ENCODE measurements at regions of chr7 and their contacts with region 1.

Region 1: DNA sequence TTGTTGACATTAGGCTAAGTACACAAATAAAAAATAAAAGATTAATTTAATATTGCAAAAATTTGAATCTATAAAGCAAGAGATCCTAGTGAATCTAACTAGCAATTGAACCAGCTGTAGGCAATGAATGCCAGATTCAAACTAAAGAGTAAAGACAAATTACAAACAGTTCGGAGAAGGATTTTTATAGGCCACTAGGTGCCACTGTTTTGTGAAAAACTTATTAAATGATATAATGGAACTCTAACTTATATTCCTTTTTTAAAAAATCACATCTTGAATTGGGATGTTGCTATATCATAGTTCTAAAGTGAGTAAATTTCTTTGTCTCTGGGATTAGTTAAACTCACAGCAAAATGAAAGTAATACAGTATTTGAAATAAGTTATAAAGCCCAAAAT is 39.1 kb upstream of the GNAI1 start:
- DNase-seq: no peak
- H3K4me3 ChIP-seq: no peak overlapping the region
- H3K27ac ChIP-seq: no peak overlapping the region
- H3K4me1 ChIP-seq: no peaks in the 10 kb centered on the region
- H3K27me3 ChIP-seq: no peaks in the 10 kb centered on the region
- CTCF ChIP-seq: peak in 1 of 3 experiments; percentile 2; a peak in 2 of 4 replicates
- EP300 ChIP-seq: no peak
- POLR2A ChIP-seq: no peak
- RAD21 ChIP-seq: peak; percentile 12 to 32; a peak in 1 of 4 replicates

Region 2: DNA sequence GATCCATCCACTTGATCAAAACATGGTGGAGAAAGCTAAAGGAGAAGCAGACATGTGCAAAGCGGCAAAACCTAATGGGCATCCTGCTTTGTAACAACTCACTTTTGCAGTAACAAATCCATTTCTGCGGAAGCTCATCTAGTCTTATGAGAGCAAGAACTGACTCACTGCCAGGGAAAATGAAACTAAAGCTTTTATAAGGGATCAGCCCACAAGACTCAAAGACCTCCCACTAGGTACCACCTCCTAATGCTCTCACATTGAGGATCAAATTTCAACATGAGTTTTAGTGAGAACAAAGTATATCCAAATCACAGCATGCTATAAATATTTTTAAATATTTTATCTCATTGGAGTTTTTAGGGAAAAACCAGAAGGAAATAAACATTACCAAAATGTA is 81.0 kb before region 1 on chr7:
- CTCF ChIA-PET with region 1: no interaction called
- POLR2A ChIA-PET with region 1: no interaction called
- DNase-seq: no peak
- H3K4me3 ChIP-seq: peak overlapping the region in 1 of 4 experiments; percentile 23; a peak in 1 of 8 replicates
- H3K27ac ChIP-seq: no peak overlapping the region
- H3K4me1 ChIP-seq: peaks cover 0 to 3% (median 1%) of the 10 kb centered on the region in 4 experiments; a peak in 2 of 7 replicates
- H3K27me3 ChIP-seq: no peaks in the 10 kb centered on the region
- CTCF ChIP-seq: no peak
- EP300 ChIP-seq: no peak
- POLR2A ChIP-seq: no peak
- RAD21 ChIP-seq: no peak

Region 3: DNA sequence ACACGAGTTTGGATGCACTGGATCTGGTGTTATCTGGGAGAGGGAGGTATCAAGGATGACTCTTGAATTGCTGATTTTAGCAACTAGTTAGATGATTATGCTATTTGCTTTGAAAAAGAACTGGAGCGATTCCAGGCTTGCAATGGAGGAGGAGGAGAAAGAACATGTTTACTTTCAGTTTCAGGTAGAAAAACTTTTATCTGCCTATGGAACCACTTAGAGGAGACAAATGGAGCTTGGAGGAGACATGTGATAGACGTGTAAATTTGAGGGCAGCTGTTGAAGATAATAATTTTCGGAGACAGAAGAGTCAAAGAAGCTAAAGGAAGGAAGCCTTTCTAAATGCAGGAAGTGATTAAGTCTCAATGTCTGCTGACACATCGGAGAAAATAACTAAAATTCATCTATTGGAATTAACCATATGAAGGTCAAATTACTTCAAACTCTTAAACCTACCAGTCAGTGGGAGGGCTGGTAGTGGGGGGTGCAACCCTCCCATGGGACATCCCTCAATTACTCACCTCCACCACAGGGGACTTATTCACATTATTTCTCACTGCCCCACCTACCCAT is 17.3 kb before region 1 on chr7:
- CTCF ChIA-PET with region 1: interaction called, 12 read pairs
- POLR2A ChIA-PET with region 1: no interaction called
- DNase-seq: no peak
- H3K4me3 ChIP-seq: no peak overlapping the region
- H3K27ac ChIP-seq: no peak overlapping the region
- H3K4me1 ChIP-seq: no peaks in the 10 kb centered on the region
- H3K27me3 ChIP-seq: no peaks in the 10 kb centered on the region
- CTCF ChIP-seq: no peak
- EP300 ChIP-seq: no peak
- POLR2A ChIP-seq: no peak
- RAD21 ChIP-seq: no peak

Region 4: DNA sequence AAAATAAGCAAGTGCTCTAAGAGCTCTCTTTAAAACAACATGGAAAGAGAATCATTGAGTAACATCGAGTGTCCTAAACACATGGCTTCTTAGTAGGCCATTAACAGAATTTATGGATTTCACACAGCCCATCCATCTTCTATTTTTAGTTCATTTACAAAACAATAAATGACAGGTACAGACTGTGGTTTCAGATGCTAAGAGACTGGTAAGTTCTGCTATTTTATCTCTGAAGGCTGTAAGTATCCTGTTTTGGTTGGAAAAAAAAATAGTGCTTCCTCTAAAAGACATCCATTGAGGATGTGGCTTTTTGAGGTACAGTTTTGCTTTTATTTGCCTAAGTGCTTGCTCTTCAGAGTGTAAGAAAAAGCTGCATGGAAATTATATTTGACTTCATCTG is 11.7 kb after region 1 on chr7:
- CTCF ChIA-PET with region 1: interaction called, 17 read pairs
- POLR2A ChIA-PET with region 1: no interaction called
- DNase-seq: no peak
- H3K4me3 ChIP-seq: no peak overlapping the region
- H3K27ac ChIP-seq: no peak overlapping the region
- H3K4me1 ChIP-seq: peaks cover 0 to 4% (median 0%) of the 10 kb centered on the region in 4 experiments; a peak in 2 of 7 replicates
- H3K27me3 ChIP-seq: no peaks in the 10 kb centered on the region
- CTCF ChIP-seq: no peak
- EP300 ChIP-seq: no peak
- POLR2A ChIP-seq: no peak
- RAD21 ChIP-seq: no peak

Region 5: GRCh38 chr7:80114159-80114558 is 18.6 kb after region 1 on chr7:
- CTCF ChIA-PET with region 1: interaction called, 13 read pairs
- POLR2A ChIA-PET with region 1: no interaction called
- DNase-seq: no peak
- H3K4me3 ChIP-seq: no peak overlapping the region
- H3K27ac ChIP-seq: no peak overlapping the region
- H3K4me1 ChIP-seq: peaks cover 0 to 3% (median 0%) of the 10 kb centered on the region in 4 experiments; a peak in 1 of 7 replicates
- H3K27me3 ChIP-seq: no peaks in the 10 kb centered on the region
- CTCF ChIP-seq: no peak
- EP300 ChIP-seq: no peak
- POLR2A ChIP-seq: no peak
- RAD21 ChIP-seq: no peak

Measured in H1 (cell line).